Common myeloid progenitor, CD34-positive (primary cell): ENCODE measurements at regions of chr4 and their contacts with region 1.

Region 1: DNA sequence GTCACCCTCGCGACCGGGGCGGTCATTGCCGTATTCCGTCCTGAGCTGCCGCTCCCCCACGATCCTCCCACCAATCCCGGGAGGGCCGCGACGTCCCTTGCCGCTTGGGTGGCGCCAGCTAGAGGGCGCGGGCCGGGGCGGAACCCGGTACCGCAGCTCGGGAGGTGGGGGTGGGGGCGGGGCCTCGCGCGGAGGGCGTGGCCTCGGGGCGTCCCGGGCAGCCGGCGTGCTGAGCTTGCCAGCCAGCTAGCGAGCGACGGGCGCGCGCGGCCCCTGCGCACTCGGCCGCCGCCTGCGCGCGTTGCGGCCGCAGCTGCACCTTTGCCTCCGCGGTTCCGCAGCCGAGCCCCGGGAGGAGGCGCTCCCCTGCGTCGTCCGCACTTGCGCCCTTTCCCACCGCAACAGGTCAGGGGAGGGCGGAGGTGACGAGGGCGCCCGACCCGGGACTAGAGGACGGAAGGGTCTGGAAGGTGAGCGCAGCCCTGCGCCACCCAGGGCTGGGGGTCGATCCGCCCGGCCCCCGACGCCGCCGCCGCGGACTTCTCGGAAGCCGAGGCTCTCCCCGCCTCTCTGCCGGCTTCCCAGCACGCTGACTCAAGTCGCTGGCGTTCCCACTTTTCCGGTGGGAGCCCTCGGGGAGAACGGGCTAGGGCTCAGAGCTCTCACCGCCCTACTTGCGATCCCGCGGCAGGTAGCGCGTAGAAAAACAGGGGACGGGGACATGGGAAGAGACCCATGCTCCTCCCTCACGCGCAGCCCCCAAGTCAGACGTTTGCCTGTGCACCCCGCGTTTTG is at the start of gene AFF1:
- DNase-seq: peak; percentile 98
- H3K4me3 ChIP-seq: peak within 1 kb of the TSS; percentile 79 to 97 (median 95)
- H3K27ac ChIP-seq: peak within 1 kb of the TSS; percentile 73 to 94
- H3K4me1 ChIP-seq: peaks cover 24 to 54% (median 41%) of the 10 kb centered on the region in 4 experiments
- H3K27me3 ChIP-seq: no peaks in the 10 kb centered on the region

Region 2: GRCh38 chr4:86895692-86896488 is 39.1 kb before region 1 on chr4:
- CTCF ChIA-PET with region 1: no interaction called
- POLR2A ChIA-PET with region 1: no interaction called
- DNase-seq: peak; percentile 68 to 85 (median 82)
- H3K4me3 ChIP-seq: no peak overlapping the region
- H3K27ac ChIP-seq: no peak overlapping the region
- H3K4me1 ChIP-seq: peaks cover 0 to 12% (median 11%) of the 10 kb centered on the region in 4 experiments
- H3K27me3 ChIP-seq: peaks cover 0 to under 1% (median 0%) of the 10 kb centered on the region in 5 experiments

Region 3: GRCh38 chr4:86947501-86948120 is 12.6 kb after region 1 on chr4:
- CTCF ChIA-PET with region 1: interaction called, 13 read pairs
- POLR2A ChIA-PET with region 1: interaction called, 4 read pairs
- DNase-seq: peak in 2 of 3 donors; percentile 70 to 78
- H3K4me3 ChIP-seq: peak overlapping the region in 1 of 7 experiments; percentile 46
- H3K27ac ChIP-seq: no peak overlapping the region
- H3K4me1 ChIP-seq: peaks cover 24 to 53% (median 37%) of the 10 kb centered on the region in 4 experiments
- H3K27me3 ChIP-seq: no peaks in the 10 kb centered on the region

Region 4: DNA sequence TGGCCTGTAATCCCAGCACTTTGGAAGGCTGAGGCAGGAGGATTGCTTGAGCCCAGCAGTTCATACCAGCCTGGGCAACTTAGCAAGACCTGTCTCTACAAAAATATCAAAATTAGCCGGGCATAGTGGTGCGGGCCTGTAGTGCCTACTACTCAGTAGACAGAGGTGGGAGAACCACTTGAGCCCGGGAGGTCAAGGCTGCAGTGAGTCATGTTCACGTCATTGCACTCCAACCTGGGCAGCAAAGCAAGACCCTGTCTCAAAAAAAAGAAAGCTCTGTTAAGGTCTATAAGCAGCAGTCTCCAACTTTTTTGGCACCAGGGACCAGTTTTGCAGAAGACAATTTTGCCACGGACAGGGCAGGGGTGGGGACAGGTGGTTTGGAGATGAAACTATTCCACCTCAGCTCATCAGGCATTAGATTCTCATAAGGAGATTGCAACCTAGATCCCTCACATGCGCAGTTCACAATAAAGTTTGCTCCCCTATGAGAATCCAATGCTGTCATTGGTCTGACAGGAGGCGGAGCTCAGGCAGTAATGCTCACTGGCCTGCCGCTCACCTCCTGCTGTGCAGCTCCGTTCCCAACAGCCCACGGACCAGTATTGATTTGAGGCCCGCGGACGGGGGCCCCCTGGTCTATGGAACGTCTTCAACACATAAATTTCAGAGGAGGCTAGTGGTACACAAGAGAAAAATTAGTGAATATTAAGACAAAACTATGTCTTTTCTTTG is 217.5 kb after region 1 on chr4:
- CTCF ChIA-PET with region 1: no interaction called
- POLR2A ChIA-PET with region 1: no interaction called
- DNase-seq: no peak
- H3K4me3 ChIP-seq: no peak overlapping the region
- H3K27ac ChIP-seq: no peak overlapping the region
- H3K4me1 ChIP-seq: no peaks in the 10 kb centered on the region
- H3K27me3 ChIP-seq: no peaks in the 10 kb centered on the region